ENCODE measurements at regions of chr19 and their contacts with region 1.

Region 1: GRCh38 chr19:10027158-10027693 is 13.9 kb downstream of the RDH8 start:
- DNase-seq: peak; percentile 30
- H3K27ac ChIP-seq: peak overlapping the region; percentile 70
- CTCF ChIP-seq: no peak

Region 2: DNA sequence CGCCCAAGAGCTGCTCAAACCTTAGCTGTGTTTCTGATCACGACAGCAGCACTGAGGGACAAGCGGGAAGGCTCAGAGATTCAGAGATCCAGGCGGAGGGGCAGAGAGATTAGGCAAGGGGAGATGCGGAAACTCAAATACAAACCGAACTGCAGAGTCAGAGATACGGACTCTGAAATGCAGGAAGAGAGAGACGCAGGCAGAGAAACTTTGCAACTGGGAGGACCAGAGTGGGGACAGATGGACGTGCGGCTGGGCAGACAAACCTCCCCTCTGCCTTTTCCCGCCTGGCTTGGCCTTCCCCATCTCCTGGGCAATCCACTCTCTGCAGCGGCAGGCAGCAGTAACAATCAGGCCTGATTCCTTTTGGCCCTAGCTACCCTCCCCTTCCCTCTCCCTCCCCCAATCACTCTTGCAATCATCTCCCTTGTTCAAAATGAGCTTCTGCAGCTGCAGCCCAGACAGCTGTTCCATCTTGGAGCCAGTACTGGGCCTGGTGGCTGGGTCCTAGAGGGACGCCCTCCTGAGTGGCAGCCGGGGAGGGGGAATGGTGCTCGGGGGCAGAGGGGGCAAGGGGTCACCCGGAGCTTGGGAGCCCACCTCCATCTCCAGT is 120.6 kb before region 1 on chr19:
- CTCF ChIA-PET with region 1: no interaction called
- POLR2A ChIA-PET with region 1: no interaction called
- DNase-seq: no peak
- H3K27ac ChIP-seq: no peak overlapping the region
- CTCF ChIP-seq: no peak

Region 3: GRCh38 chr19:9932835-9933234 is 94.4 kb before region 1 on chr19:
- CTCF ChIA-PET with region 1: interaction called, 33 read pairs
- POLR2A ChIA-PET with region 1: no interaction called
- DNase-seq: no peak
- H3K27ac ChIP-seq: no peak overlapping the region
- CTCF ChIP-seq: no peak

Region 4: GRCh38 chr19:10380313-10381102 is 353.3 kb after region 1 on chr19 and contains the start of gene TYK2:
- CTCF ChIA-PET with region 1: no interaction called
- POLR2A ChIA-PET with region 1: no interaction called
- DNase-seq: peak; percentile 100
- H3K27ac ChIP-seq: peak within 1 kb of the TSS; percentile 84
- CTCF ChIP-seq: no peak

Measured in RWPE1 (cell line).